Naive thymus-derived CD4-positive, alpha-beta T cell (primary cell): ENCODE measurements at regions of chr12 and their contacts with region 1.

Region 1: GRCh38 chr12:56468216-56469006 is at the start of gene SPRYD4:
- DNase-seq: peak; percentile 89 to 97 (median 96)
- ATAC-seq: peak; percentile 99
- H3K4me3 ChIP-seq: peak within 1 kb of the TSS; percentile 99
- H3K4me3 Mint-ChIP-seq: peak within 1 kb of the TSS; percentile 90 to 99 (median 97)
- H3K27ac ChIP-seq: peak within 1 kb of the TSS; percentile 87
- H3K27ac Mint-ChIP-seq: peak within 1 kb of the TSS; percentile 92 to 99 (median 98)
- H3K4me1 ChIP-seq: peaks cover 12 to 20% of the 10 kb centered on the region in 2 donors
- H3K4me1 Mint-ChIP-seq: peaks cover 6 to 51% (median 26%) of the 10 kb centered on the region in 7 donors
- H3K27me3 ChIP-seq: no peaks in the 10 kb centered on the region
- H3K27me3 Mint-ChIP-seq: no peaks in the 10 kb centered on the region
- total RNA-seq, gene SPRYD4: 5.2 to 7.5 (median 7.2) TPM

Region 2: GRCh38 chr12:55829967-55830600 is 638.3 kb before region 1 on chr12:
- CTCF ChIA-PET with region 1: no interaction called
- POLR2A ChIA-PET with region 1: no interaction called
- intact Hi-C with region 1: loop called in 1 of 2 experiments (anchors 1 kb)
- DNase-seq: peak in 5 of 9 donors; percentile 16 to 44 (median 20)
- ATAC-seq: peak; percentile 2
- H3K4me3 ChIP-seq: peak overlapping the region; percentile 99
- H3K4me3 Mint-ChIP-seq: peak overlapping the region; percentile 88 to 99 (median 99)
- H3K27ac ChIP-seq: peak overlapping the region; percentile 84
- H3K27ac Mint-ChIP-seq: peak overlapping the region; percentile 85 to 98 (median 95)
- H3K4me1 ChIP-seq: peaks cover 37 to 40% of the 10 kb centered on the region in 2 donors
- H3K4me1 Mint-ChIP-seq: peaks cover 42 to 69% (median 53%) of the 10 kb centered on the region in 7 donors
- H3K27me3 ChIP-seq: no peaks in the 10 kb centered on the region
- H3K27me3 Mint-ChIP-seq: no peaks in the 10 kb centered on the region

Region 3: DNA sequence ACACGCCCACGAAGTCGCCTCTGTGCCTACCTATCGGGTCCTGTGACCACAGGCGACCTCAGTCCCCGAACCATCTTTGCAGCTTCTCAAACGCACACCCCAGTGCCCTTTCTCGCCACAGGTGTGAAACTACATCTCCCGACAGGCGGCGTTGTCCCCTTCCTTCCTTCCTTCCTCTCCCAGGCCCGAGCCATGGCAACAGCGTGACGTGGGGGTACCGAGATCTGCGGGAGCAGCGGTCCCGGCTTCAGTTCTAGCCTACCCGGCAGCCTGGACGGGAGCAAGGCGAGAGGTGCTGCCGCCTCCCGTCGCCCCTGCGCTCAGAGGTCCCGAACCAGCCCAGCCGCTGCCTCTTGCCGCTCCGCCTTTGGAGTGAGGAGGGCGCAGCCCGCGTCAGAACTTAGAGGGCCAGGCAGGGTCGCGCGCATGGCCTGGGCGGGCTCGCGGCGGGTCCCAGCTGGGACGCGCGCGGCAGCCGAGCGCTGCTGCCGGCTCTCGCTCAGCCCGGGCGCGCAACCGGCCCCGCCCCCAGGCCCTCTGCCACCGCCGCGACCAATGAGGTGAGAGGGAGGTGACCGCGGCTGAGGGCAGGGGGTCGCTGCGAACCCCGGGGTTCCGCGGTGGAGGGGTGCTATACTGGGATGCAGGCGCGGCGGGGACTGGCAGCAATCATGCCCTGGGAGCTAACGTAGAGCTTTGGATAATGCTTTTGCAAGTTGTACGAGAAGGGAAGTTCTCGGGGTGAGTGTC is 201.5 kb before region 1 on chr12 and contains the start of gene COQ10A:
- CTCF ChIA-PET with region 1: interaction called, 4 read pairs
- POLR2A ChIA-PET with region 1: interaction called, 5 read pairs
- intact Hi-C with region 1: loop called (anchors 1 kb)
- DNase-seq: peak; percentile 78 to 92 (median 89)
- ATAC-seq: peak; percentile 93
- H3K4me3 ChIP-seq: peak within 1 kb of the TSS; percentile 88
- H3K4me3 Mint-ChIP-seq: peak within 1 kb of the TSS; percentile 83 to 100 (median 96)
- H3K27ac ChIP-seq: peak within 1 kb of the TSS; percentile 94
- H3K27ac Mint-ChIP-seq: peak within 1 kb of the TSS; percentile 89 to 97 (median 94)
- H3K4me1 ChIP-seq: peaks cover 0 to 8% of the 10 kb centered on the region in 2 donors
- H3K4me1 Mint-ChIP-seq: peaks cover 0 to 22% (median 20%) of the 10 kb centered on the region in 7 donors
- H3K27me3 ChIP-seq: no peaks in the 10 kb centered on the region
- H3K27me3 Mint-ChIP-seq: peaks cover 0 to 2% (median 0%) of the 10 kb centered on the region in 5 donors
- total RNA-seq, gene COQ10A: 22.5 to 39.4 (median 31.5) TPM

Region 4: GRCh38 chr12:56425193-56425592 is 43.2 kb before region 1 on chr12:
- CTCF ChIA-PET with region 1: interaction called, 6 read pairs
- POLR2A ChIA-PET with region 1: no interaction called
- intact Hi-C with region 1: loop called in 1 of 2 experiments (anchors 1 kb)
- DNase-seq: peak in 6 of 9 donors; percentile 7 to 45 (median 35)
- ATAC-seq: peak; percentile 42
- H3K4me3 ChIP-seq: no peak overlapping the region
- H3K4me3 Mint-ChIP-seq: peak overlapping the region in 8 of 10 donors; percentile 39 to 73 (median 57)
- H3K27ac ChIP-seq: peak overlapping the region; percentile 38
- H3K27ac Mint-ChIP-seq: peak overlapping the region; percentile 33 to 91 (median 85)
- H3K4me1 ChIP-seq: peaks cover 0 to 12% of the 10 kb centered on the region in 2 donors
- H3K4me1 Mint-ChIP-seq: peaks cover 10 to 26% (median 15%) of the 10 kb centered on the region in 7 donors
- H3K27me3 ChIP-seq: no peaks in the 10 kb centered on the region
- H3K27me3 Mint-ChIP-seq: no peaks in the 10 kb centered on the region

Region 5: DNA sequence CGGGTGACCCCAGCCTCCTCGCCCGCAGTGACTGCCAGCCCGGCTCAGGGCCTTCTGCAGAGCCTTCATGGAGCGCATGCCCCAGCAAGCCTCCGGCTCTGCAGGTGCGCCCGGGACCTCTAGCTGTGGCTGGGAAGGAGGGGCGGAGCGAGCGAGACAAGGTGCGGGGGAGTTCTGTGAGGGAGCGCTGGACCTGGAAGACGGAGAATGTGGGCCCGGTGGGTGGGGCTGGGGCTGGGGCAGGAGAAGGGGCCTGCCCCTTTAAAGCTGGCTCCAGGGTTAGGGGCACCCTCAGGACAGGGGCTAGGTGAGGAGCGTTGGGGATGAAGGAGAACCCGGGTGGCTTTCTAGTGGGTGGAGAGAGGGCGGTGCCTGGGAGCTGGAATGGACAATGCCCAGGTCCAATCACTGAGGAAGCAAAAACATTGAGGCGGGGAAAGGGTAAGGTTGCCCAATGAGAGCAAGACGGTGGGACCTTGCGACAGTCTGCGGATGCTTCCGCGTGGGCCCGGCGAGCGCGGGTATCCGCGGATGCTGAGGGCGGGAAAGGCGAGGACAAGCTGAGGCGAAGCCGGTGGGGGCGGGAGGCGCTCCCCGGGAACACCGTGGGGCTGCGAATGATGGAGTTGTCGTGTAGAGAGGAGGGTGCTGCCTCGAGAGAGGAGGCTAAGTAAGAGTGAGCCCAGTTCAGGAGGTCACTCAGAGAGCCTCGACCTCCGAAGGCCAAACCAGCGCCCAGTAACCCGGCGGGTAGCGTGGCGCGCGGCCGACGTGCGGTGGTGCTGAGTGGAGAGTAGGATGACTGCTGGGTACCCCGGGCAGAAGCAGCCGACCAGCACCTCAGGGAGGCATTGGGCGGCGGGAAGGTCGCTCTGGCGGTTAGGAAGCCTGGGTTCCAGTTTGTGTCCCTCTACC is 19.9 kb after region 1 on chr12 and contains the start of gene GLS2:
- CTCF ChIA-PET with region 1: interaction called, 4 read pairs
- POLR2A ChIA-PET with region 1: interaction called, 7 read pairs
- intact Hi-C with region 1: loop called (anchors 1 to 2 kb)
- DNase-seq: peak; percentile 42 to 82 (median 74)
- ATAC-seq: peak; percentile 99
- H3K4me3 ChIP-seq: peak within 1 kb of the TSS; percentile 81
- H3K4me3 Mint-ChIP-seq: peak within 1 kb of the TSS; percentile 84 to 97 (median 92)
- H3K27ac ChIP-seq: peak within 1 kb of the TSS; percentile 49
- H3K27ac Mint-ChIP-seq: peak within 1 kb of the TSS; percentile 59 to 91 (median 78)
- H3K4me1 ChIP-seq: peaks cover 0 to 6% of the 10 kb centered on the region in 2 donors
- H3K4me1 Mint-ChIP-seq: peaks cover 12 to 21% (median 16%) of the 10 kb centered on the region in 7 donors
- H3K27me3 ChIP-seq: peaks cover 0 to 6% of the 10 kb centered on the region in 2 donors
- H3K27me3 Mint-ChIP-seq: peaks cover 0 to 60% (median 20%) of the 10 kb centered on the region in 5 donors
- total RNA-seq, gene GLS2: 0.94 to 10.2 (median 3.0) TPM

Region 6: DNA sequence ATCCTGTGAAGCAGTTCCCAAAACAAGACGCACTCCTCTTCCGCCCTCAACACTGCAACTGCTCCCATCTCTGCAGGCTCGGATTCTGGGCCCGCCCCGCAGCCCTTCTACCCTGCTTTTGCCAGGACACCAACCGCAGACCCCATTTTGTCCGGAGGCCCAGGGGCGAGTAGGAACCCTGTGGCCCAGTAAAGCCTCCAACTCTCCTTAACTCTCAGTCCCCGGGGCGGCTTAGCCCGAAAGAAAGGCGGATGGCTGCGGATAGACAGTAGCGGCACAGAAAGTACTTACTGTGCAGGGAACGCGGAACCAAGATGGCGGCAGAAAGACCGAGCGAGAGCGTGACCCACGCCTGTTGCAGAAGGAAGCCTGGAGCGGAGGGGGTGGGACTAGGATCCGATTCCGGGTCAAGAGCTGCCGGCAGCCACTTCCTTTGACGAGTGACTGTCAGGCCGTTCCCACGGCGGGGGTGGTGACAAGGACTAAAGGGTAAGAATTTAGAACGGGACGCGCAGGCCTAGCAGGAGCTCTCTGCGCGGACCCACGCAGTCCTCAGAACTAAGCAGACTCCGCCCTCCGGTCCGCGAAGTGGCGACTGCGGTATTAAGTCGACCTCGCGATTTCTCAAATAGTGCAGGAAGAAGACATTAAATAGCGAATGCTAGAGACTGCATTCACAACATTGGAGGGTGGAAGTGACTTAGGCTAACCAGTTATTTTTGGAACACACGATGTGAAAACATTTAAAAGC is 256.7 kb after region 1 on chr12 and contains the start of gene NACA:
- CTCF ChIA-PET with region 1: no interaction called
- POLR2A ChIA-PET with region 1: no interaction called
- intact Hi-C with region 1: no loop called
- DNase-seq: peak; percentile 85 to 99 (median 96)
- ATAC-seq: peak; percentile 95
- H3K4me3 ChIP-seq: peak within 1 kb of the TSS; percentile 100
- H3K4me3 Mint-ChIP-seq: peak within 1 kb of the TSS; percentile 94 to 100 (median 97)
- H3K27ac ChIP-seq: peak within 1 kb of the TSS; percentile 87
- H3K27ac Mint-ChIP-seq: peak within 1 kb of the TSS; percentile 94 to 100 (median 98)
- H3K4me1 ChIP-seq: peaks cover 40 to 43% of the 10 kb centered on the region in 2 donors
- H3K4me1 Mint-ChIP-seq: peaks cover 39 to 53% (median 49%) of the 10 kb centered on the region in 7 donors
- H3K27me3 ChIP-seq: no peaks in the 10 kb centered on the region
- H3K27me3 Mint-ChIP-seq: no peaks in the 10 kb centered on the region
- total RNA-seq, gene NACA: 834 to 1,486 (median 1,355) TPM

Region 7: DNA sequence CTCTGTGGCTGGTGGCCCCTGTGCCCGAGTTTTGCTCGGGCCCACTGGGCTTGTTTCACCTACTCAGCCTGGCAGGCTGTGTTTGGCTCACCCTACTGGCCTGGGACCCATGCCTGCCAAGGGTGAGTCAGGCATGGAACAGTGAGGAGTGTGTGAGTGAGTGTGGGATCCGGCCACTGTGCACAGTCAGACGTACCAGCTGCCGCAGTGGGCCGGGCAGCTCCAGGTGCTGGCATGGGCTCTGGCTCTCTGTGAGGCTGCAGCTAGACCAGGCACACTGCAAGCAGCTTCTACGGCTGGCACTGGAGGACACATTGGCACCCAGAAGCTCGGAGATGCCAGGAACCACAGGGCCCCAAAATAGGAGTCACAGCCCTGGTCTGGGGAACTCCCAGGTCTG is 335.3 kb after region 1 on chr12:
- CTCF ChIA-PET with region 1: no interaction called
- POLR2A ChIA-PET with region 1: no interaction called
- intact Hi-C with region 1: no loop called
- DNase-seq: no peak
- ATAC-seq: no peak
- H3K4me3 ChIP-seq: no peak overlapping the region
- H3K4me3 Mint-ChIP-seq: no peak overlapping the region
- H3K27ac ChIP-seq: no peak overlapping the region
- H3K27ac Mint-ChIP-seq: no peak overlapping the region
- H3K4me1 ChIP-seq: no peaks in the 10 kb centered on the region
- H3K4me1 Mint-ChIP-seq: no peaks in the 10 kb centered on the region
- H3K27me3 ChIP-seq: no peaks in the 10 kb centered on the region
- H3K27me3 Mint-ChIP-seq: peaks cover 0 to 3% (median 0%) of the 10 kb centered on the region in 5 donors